Heart left ventricle (tissue), 16 donors: ENCODE measurements at regions of chr6 and their contacts with region 1.

Region 1: GRCh38 chr6:53410508-53411258 is 61.9 kb upstream of the ELOVL5 start:
- DNase-seq: peak; percentile 23 to 68 (median 39)
- ATAC-seq: peak; percentile 75 to 90 (median 84)
- H3K4me3 ChIP-seq: no peak overlapping the region
- H3K27ac ChIP-seq: no peak overlapping the region
- H3K4me1 ChIP-seq: peaks cover 0 to 5% (median 0%) of the 10 kb centered on the region in 12 donors
- H3K27me3 ChIP-seq: no peaks in the 10 kb centered on the region
- CTCF ChIP-seq: peak; percentile 52 to 82 (median 70)
- POLR2A ChIP-seq: no peak

Region 2: DNA sequence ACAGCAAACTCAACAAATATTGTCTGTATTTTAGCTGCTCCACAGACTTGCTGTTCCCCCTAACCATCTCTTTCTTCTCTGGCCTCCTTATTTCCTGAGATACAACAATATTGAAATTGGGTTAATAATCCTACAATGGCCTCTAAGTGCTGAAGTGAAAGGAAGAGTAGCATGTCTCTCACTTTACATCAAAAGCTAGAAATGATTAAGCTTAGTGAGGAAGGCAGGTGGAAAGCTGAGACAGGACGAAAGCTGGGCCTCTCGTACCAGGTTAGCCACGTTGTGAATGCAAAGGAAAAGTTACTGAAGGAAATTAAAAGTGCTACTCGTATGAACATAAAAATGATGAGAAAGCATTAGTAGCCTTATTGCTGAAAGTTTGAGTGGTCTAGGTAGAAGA is 125.8 kb before region 1 on chr6:
- intact Hi-C with region 1: loop called in 2 of 10 experiments (anchors 5 to 10 kb)
- DNase-seq: no peak
- ATAC-seq: no peak
- H3K4me3 ChIP-seq: no peak overlapping the region
- H3K27ac ChIP-seq: no peak overlapping the region
- H3K4me1 ChIP-seq: peaks cover 0 to 47% (median 25%) of the 10 kb centered on the region in 12 donors
- H3K27me3 ChIP-seq: no peaks in the 10 kb centered on the region
- CTCF ChIP-seq: no peak
- POLR2A ChIP-seq: no peak

Region 3: GRCh38 chr6:53476964-53477363 is 66.3 kb after region 1 on chr6:
- intact Hi-C with region 1: loop called in 4 of 10 experiments (anchors 5 to 10 kb)
- DNase-seq: no peak
- ATAC-seq: no peak
- H3K4me3 ChIP-seq: no peak overlapping the region
- H3K27ac ChIP-seq: no peak overlapping the region
- H3K4me1 ChIP-seq: no peaks in the 10 kb centered on the region
- H3K27me3 ChIP-seq: no peaks in the 10 kb centered on the region
- CTCF ChIP-seq: no peak
- POLR2A ChIP-seq: no peak

Region 4: GRCh38 chr6:54255886-54256285 is 845.2 kb after region 1 on chr6:
- intact Hi-C with region 1: no loop called
- DNase-seq: no peak
- ATAC-seq: peak; percentile 91 to 95 (median 92)
- H3K4me3 ChIP-seq: no peak overlapping the region
- H3K27ac ChIP-seq: peak overlapping the region; percentile 1 to 87 (median 70)
- H3K4me1 ChIP-seq: peaks cover 0 to 34% (median 12%) of the 10 kb centered on the region in 12 donors
- H3K27me3 ChIP-seq: no peaks in the 10 kb centered on the region
- CTCF ChIP-seq: no peak
- POLR2A ChIP-seq: no peak